ENCODE measurements at regions of chr20 and their contacts with region 1.

Region 1: GRCh38 chr20:32031007-32031958 is 20.8 kb upstream of the HCK start:
- DNase-seq: peak; percentile 86 to 89
- ATAC-seq: peak; percentile 90 to 99
- H3K4me3 ChIP-seq: peak overlapping the region; percentile 24
- H3K27ac ChIP-seq: peak overlapping the region in 1 of 2 experiments; percentile 64; a peak in 4 of 6 replicates
- H3K4me1 ChIP-seq: no peaks in the 10 kb centered on the region; the same call in 1 of the 3 replicates
- CTCF ChIP-seq: peak; percentile 99
- EP300 ChIP-seq: no peak
- POLR2A ChIP-seq: no peak
- RAD21 ChIP-seq: peak; percentile 88 to 90

Region 2: DNA sequence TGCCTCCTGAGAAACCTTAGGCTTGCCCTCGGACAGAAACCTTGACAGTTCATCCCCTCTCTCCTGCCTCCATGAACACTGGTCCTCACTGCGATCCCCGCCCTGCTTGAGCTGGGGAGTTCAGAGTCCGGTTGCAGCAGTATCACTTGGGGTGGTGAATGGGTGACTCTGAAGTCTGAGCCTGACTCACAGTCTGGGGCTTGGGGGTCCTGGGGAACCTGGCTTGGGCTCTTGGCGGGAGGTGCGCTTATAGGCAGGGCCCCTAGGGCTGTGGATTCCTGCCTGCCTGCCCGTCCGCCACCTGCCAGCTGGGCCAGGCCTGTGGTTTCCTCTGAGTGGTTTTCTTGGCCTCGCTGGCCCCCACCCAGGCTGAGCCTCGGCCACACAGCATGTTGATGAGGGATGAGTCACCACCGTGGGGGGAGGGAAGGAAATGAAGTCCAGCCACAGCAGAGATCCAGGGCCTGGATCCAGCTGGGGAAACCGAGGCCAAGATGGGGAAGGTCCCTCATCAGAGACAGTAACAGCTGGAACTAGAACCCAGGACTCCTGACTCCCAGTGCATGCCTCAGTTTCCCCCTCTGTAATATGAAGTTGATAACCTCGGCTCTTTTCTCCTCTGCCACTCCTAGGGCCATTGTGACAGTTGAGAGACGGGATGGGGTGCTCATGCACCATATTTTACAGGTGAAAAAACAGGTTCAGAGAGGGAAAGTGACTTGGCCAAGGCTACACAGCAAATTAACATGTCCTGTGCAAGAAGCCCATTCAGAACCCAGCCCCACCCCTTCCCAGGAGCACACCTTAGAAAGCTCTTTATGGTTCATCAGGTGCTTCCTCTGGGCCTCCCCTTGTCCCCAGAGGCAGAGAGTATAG is 195.1 kb before region 1 on chr20:
- CTCF ChIA-PET with region 1: interaction called, 25 read pairs
- POLR2A ChIA-PET with region 1: no interaction called
- DNase-seq: peak; percentile 56 to 72
- ATAC-seq: peak; percentile 55 to 63
- H3K4me3 ChIP-seq: no peak overlapping the region
- H3K27ac ChIP-seq: peak overlapping the region; percentile 84 to 86
- H3K4me1 ChIP-seq: peaks cover 69% of the 10 kb centered on the region
- CTCF ChIP-seq: no peak
- EP300 ChIP-seq: peak; percentile 17 to 47; a peak in 2 of 5 replicates
- POLR2A ChIP-seq: no peak
- RAD21 ChIP-seq: no peak

Region 3: DNA sequence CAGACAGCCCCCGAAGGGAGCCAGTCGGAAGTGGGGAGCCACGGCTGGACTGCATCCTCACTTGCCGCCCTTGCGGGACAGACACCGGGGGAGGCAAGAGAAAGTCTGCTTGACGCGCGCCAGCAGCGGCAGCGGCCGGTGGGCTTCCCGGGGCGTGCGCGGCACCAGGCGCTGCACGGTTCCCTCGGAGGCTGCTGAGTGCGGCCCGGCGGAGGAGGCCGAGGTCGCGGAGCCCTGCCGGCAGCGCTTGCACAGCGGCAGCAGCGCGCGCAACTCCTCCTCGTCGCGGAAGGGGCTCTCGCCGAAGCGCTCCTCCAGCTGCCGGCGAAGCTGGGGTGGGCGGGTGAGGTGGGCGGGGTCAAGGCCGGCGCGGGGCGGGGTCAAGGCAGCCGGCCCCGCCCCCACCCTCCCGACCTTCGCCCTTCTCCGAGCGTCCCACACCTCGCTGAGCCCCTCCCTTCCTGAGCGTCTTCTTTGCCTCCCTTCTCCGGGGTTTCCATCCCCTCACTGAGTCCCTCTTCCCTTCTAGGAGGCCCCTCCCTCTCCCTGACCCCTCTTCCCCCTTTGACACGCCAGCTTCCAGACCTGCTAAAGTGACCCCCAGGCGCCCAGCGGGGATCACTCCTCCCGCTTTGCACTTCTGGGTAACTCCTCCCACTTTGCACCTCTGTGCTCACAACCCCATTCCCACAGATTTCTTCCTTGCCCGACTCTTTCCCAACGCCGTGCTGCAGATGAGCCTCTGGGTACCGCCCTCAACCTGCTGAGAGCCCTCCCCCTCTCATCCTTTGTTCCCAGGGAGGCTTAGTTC is 169.7 kb before region 1 on chr20:
- CTCF ChIA-PET with region 1: interaction called, 193 read pairs
- POLR2A ChIA-PET with region 1: interaction called, 3 read pairs
- DNase-seq: peak; percentile 75 to 85
- ATAC-seq: peak; percentile 72 to 88
- H3K4me3 ChIP-seq: peak overlapping the region; percentile 57
- H3K27ac ChIP-seq: peak overlapping the region; percentile 28 to 82; a peak in 5 of 6 replicates
- H3K4me1 ChIP-seq: peaks cover 15% of the 10 kb centered on the region
- CTCF ChIP-seq: no peak
- EP300 ChIP-seq: no peak
- POLR2A ChIP-seq: peak; percentile 50
- RAD21 ChIP-seq: no peak

Region 4: DNA sequence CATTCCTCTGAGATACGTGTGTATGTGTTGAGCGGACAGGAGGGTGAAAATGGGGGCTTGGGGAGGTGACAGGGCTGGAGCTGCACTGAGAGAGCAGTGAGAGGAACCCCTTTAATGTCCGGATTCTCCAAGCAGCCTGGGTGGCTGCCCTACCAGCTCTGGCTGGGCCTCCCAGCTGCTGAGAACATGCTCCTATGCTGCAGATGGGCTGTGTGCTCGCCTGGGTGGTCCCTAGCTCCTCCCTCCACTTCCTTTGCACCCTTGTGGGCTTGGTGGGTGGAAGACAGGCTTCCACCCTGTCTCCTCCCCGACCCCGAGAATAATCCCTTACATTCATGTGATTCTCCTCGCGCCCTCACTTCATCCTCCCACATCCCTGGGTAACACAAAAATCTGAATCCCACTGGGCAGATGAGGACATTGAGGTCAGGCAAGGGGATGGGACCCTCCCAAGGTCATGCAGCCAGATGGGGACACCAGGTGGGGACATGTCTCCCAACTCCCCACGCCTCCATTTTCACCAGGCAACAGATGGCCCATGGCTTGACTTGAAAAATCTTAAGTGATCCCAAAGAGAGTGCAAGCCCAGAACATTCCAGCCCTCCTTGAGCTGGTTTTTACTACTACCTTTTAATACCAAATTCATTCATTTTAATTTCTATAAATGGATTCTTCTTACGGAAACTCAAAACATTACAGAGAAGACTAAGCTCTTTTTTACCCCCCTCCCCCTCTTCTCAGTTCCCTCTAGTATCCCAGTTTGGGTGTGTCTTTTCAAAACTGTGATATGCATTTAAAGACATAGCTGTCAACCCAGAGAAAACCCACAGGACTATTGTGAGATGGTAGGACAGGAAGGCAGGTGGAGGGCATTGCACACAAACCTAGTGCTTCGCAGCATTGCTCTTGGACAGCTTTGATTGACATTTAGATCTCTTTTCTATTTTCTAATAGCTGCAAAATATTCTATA is 74.4 kb before region 1 on chr20:
- CTCF ChIA-PET with region 1: interaction called, 25 read pairs
- POLR2A ChIA-PET with region 1: no interaction called
- DNase-seq: no peak
- ATAC-seq: no peak
- H3K4me3 ChIP-seq: no peak overlapping the region
- H3K27ac ChIP-seq: no peak overlapping the region
- H3K4me1 ChIP-seq: no peaks in the 10 kb centered on the region
- CTCF ChIP-seq: no peak
- EP300 ChIP-seq: no peak
- POLR2A ChIP-seq: no peak
- RAD21 ChIP-seq: no peak

Region 5: DNA sequence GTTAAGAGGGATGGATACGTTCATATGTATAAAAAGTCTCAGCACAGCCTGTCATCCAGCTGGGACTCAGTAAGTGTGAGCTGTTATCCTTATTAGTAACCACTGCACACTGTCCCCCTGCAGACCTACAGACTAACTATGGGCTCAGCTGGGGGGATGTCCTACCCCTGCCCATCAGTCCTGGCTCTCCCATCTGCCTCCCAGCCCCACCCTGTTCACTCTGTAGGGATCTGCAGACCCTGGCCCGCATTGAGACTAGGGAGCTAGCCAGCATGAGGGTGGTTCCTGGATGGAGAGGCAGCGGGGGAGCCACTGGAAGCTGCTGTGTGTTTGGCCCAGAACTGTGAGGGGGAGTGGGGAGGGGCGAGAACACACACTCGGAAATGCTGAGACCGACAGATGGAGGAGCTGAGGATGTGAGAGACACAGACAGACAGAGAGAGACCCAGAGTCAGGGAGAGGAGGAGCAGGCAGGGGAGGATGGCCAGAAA is 46.3 kb before region 1 on chr20:
- CTCF ChIA-PET with region 1: interaction called, 10 read pairs
- POLR2A ChIA-PET with region 1: no interaction called
- DNase-seq: no peak
- ATAC-seq: no peak; a peak in 1 of 6 replicates
- H3K4me3 ChIP-seq: no peak overlapping the region
- H3K27ac ChIP-seq: peak overlapping the region in 1 of 2 experiments; percentile 41; a peak in 1 of 6 replicates
- H3K4me1 ChIP-seq: peaks cover 22% of the 10 kb centered on the region
- CTCF ChIP-seq: no peak
- EP300 ChIP-seq: no peak
- POLR2A ChIP-seq: no peak
- RAD21 ChIP-seq: no peak

Region 6: GRCh38 chr20:32052090-32052777 is 21.0 kb after region 1 on chr20 and contains the start of gene HCK:
- CTCF ChIA-PET with region 1: interaction called, 17 read pairs
- POLR2A ChIA-PET with region 1: no interaction called
- DNase-seq: peak in 1 of 2 experiments; percentile 31
- ATAC-seq: peak; percentile 71 to 84; a peak in 4 of 6 replicates
- H3K4me3 ChIP-seq: peak within 1 kb of the TSS; percentile 42
- H3K27ac ChIP-seq: peak within 1 kb of the TSS in 1 of 2 experiments; percentile 73; a peak in 3 of 6 replicates
- H3K4me1 ChIP-seq: no peaks in the 10 kb centered on the region; the same call in 2 of the 3 replicates
- CTCF ChIP-seq: no peak
- EP300 ChIP-seq: no peak
- POLR2A ChIP-seq: no peak
- RAD21 ChIP-seq: no peak
- polyA plus RNA-seq, gene HCK: 0.06 and 0.07 TPM in 2 replicates

Region 7: GRCh38 chr20:32179515-32179914 is 148.2 kb after region 1 on chr20:
- CTCF ChIA-PET with region 1: no interaction called
- POLR2A ChIA-PET with region 1: no interaction called
- DNase-seq: no peak
- ATAC-seq: 0 out of 6 replicates have a peak, but pooled peaks of 1 of the 2 experiments have one; percentile 36
- H3K4me3 ChIP-seq: no peak overlapping the region
- H3K27ac ChIP-seq: no peak overlapping the region
- H3K4me1 ChIP-seq: no peaks in the 10 kb centered on the region
- CTCF ChIP-seq: no peak
- EP300 ChIP-seq: no peak
- POLR2A ChIP-seq: no peak
- RAD21 ChIP-seq: no peak